ENCODE measurements at regions of chr18 and their contacts with region 1.

Region 1: GRCh38 chr18:70421471-70422390 is 132.9 kb downstream of the SOCS6 start:
- DNase-seq: peak; percentile 96
- H3K4me3 ChIP-seq: no peak overlapping the region
- H3K27ac ChIP-seq: peak overlapping the region; percentile 95
- H3K4me1 ChIP-seq: peaks cover 45% of the 10 kb centered on the region
- H3K27me3 ChIP-seq: no peaks in the 10 kb centered on the region
- CTCF ChIP-seq: no peak

Region 2: DNA sequence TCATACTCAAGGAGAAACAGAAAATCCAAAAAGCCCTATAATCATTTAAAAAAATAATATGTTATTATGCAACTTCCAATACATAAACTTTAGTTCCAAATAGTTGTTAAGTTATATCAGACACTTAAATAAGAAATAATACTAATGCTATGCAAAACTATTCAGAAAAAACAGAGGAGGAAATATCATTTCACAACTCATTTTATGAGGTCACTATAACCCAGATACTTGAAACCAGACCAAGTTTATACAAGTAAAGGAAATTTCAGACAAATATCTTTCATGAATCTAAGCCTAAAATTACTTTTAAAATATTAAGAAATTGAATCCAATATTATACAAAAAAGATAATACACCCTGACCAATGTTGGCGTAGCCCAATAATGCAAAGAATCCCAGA is 734.9 kb before region 1 on chr18:
- CTCF ChIA-PET with region 1: no interaction called
- dilution Hi-C with region 1: no loop called
- in situ Hi-C with region 1: no loop called
- intact Hi-C with region 1: no loop called
- DNase-seq: no peak
- H3K4me3 ChIP-seq: no peak overlapping the region
- H3K27ac ChIP-seq: no peak overlapping the region
- H3K4me1 ChIP-seq: no peaks in the 10 kb centered on the region
- H3K27me3 ChIP-seq: no peaks in the 10 kb centered on the region
- CTCF ChIP-seq: no peak

Region 3: DNA sequence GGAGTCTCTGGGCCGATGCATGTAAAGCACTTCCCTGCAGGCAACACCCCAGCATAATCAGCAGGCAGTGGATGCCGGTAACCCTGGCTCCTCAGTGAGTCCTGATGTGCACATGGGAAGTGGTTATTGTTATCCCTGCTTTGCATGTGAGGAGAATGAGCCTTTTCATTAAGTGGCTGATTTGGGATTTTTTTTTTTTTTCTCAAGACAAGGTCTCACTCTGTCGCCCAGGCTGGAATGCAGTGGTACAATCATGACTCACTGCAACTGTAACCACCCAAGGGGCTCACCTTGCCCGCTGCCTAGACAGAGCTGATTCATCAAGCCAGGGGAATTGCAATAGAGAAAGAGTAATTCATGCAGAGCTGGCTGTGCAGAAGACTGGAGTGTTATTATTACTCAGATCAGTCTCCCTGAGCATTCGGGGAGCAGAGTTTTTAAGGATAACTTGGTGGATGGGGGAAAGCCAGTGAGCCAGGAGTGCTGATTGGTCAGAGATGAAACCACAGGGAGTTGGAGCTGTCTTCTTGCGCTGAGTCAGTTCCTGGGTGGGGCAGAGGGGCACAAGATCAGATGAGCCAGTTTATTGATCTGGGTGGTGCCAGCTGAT is 37.4 kb before region 1 on chr18:
- CTCF ChIA-PET with region 1: no interaction called
- dilution Hi-C with region 1: no loop called
- in situ Hi-C with region 1: no loop called
- intact Hi-C with region 1: loop called (anchors 2 kb)
- DNase-seq: peak; percentile 99
- H3K4me3 ChIP-seq: no peak overlapping the region
- H3K27ac ChIP-seq: peak overlapping the region; percentile 85
- H3K4me1 ChIP-seq: peaks cover 27% of the 10 kb centered on the region
- H3K27me3 ChIP-seq: no peaks in the 10 kb centered on the region
- CTCF ChIP-seq: no peak

Measured in mammary epithelial cell (primary cell).